ENCODE measurements at regions of chr16 and their contacts with region 1.

Region 1: GRCh38 chr16:1048442-1049112 is 24.0 kb upstream of the SSTR5 start:
- DNase-seq: no peak
- H3K4me3 ChIP-seq: no peak overlapping the region
- H3K27ac ChIP-seq: no peak overlapping the region
- H3K4me1 ChIP-seq: no peaks in the 10 kb centered on the region
- H3K27me3 ChIP-seq: peaks cover 17% of the 10 kb centered on the region
- CTCF ChIP-seq: no peak

Region 2: DNA sequence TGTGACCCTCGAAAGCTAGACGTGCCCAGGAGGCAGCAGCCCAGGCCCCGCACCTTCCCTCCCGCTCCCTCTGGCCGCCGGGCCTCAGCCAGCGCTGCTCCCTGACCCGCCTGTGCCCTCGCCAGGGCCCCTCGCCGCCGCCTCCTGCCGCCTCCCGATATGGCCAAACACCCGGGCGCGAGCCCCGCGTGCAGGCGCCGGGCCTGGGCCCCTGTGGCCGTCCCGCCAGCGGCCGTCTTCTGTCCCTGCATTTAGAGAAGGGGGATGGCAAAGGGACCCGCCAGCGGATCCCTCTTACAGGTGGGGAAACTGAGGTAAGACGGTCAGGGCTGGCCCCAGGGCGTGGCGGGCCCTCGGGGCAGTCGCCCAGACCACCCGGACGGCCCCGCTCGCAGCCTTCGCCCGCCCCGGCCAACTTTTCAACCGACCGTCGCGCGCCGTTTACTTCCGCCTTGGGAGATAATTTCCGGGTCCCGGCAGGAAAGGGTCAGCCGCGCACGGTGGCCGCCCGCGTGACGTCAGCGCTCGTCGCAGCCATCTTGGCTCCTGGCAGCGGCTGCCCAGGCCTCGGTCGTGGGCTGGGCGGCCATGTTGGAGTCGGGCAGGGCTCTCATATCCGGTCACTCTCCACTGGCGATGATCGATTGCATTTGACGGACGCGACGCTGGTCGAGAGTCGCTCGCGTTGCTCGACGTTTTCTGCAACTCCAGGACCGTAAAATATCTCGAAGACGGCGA is 241.1 kb before region 1 on chr16:
- CTCF ChIA-PET with region 1: no interaction called
- dilution Hi-C with region 1: no loop called
- in situ Hi-C with region 1: loop called (anchors 10 to 25 kb)
- intact Hi-C with region 1: no loop called
- DNase-seq: peak; percentile 85
- H3K4me3 ChIP-seq: peak overlapping the region; percentile 62 to 69 (median 64)
- H3K27ac ChIP-seq: peak overlapping the region; percentile 62
- H3K4me1 ChIP-seq: no peaks in the 10 kb centered on the region
- H3K27me3 ChIP-seq: peaks cover 2% of the 10 kb centered on the region
- CTCF ChIP-seq: no peak

Region 3: DNA sequence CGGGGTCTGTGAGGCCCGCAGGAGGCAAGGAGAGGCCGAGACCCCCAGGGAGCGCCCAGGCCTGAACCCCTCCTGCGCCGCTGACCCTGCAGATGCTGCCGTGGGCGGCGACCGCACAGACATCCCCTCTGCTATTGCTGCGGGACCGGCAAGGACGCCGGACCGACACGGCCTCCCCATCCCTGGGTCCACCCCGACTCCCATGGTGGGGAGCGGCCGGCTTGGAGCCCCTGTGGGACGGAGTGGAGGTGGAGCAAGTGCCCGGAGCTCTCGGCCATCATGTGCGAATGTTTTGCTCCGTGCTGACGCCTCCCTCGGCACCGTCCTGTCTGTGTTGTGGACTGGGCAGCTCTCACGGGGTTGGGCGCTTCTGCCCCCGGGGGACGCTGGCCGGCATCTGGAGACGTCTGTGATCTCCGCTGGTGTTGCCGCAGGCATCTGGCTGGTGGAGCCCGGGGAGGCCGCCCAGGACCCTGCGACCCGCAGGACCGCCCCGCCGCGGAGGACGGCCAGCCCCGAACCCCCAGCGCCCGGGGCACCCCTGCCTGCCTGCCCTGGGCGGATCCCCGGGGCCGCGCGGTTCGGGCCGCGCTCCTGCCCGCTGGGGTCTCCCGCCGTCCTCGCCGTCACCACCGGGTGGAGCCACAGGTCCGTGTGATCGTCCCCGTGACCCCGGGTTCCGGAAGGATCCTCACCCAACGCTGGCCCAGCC is 235.2 kb before region 1 on chr16:
- CTCF ChIA-PET with region 1: no interaction called
- dilution Hi-C with region 1: no loop called
- in situ Hi-C with region 1: loop called (anchors 10 to 25 kb)
- intact Hi-C with region 1: no loop called
- DNase-seq: no peak
- H3K4me3 ChIP-seq: no peak overlapping the region
- H3K27ac ChIP-seq: no peak overlapping the region
- H3K4me1 ChIP-seq: peaks cover 4% of the 10 kb centered on the region
- H3K27me3 ChIP-seq: peaks cover 3% of the 10 kb centered on the region
- CTCF ChIP-seq: peak; percentile 13 to 49

Region 4: DNA sequence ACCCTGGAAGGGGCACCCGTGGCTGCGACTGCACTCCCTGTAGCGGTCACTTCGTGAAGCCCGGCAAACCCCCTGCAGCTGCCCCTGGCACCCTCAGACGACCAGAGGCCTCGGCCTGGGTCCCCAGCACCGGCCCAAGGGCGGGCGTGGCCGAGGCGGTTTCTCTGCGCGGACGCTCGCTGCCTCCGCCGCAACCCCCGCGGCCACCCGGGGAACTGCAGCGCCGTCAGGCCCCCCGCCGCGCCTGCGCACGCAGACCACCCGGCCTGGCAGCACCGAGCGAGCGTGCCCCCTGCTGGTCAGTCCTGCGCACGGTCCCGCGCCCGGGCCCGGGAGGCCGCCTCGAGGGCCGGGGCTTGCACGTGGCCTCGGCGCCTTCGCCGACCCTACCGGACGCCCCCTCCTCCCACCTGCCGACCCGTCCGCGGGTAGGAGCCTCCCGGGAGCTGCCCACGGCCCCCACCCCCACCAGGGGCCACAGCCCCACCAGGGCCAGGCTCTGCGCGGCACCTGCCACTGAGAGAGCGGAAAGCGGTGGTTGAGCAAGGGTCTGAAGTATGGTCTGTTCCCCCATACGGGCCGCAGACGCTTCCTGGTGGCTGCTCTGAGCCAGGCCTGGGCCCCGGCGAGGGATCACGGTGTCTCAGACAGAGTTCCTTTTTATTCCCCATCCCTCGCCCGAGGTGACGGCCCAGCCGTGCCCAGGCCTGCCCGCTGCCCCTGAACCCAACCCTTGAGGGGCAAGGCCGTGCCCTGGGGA is 881.2 kb after region 1 on chr16:
- CTCF ChIA-PET with region 1: no interaction called
- dilution Hi-C with region 1: no loop called
- in situ Hi-C with region 1: no loop called
- intact Hi-C with region 1: no loop called
- DNase-seq: peak; percentile 71
- H3K4me3 ChIP-seq: peak overlapping the region; percentile 10 to 64 (median 45)
- H3K27ac ChIP-seq: no peak overlapping the region
- H3K4me1 ChIP-seq: peaks cover 6% of the 10 kb centered on the region
- H3K27me3 ChIP-seq: no peaks in the 10 kb centered on the region
- CTCF ChIP-seq: peak; percentile 64 to 79

Measured in mammary epithelial cell (primary cell).